Posterior vena cava (tissue), 2 donors: ENCODE measurements at regions of chr13 and their contacts with region 1.

Region 1: GRCh38 chr13:30802953-30803478 is 67.7 kb downstream of the ALOX5AP start:
- DNase-seq: peak; percentile 98

Region 2: DNA sequence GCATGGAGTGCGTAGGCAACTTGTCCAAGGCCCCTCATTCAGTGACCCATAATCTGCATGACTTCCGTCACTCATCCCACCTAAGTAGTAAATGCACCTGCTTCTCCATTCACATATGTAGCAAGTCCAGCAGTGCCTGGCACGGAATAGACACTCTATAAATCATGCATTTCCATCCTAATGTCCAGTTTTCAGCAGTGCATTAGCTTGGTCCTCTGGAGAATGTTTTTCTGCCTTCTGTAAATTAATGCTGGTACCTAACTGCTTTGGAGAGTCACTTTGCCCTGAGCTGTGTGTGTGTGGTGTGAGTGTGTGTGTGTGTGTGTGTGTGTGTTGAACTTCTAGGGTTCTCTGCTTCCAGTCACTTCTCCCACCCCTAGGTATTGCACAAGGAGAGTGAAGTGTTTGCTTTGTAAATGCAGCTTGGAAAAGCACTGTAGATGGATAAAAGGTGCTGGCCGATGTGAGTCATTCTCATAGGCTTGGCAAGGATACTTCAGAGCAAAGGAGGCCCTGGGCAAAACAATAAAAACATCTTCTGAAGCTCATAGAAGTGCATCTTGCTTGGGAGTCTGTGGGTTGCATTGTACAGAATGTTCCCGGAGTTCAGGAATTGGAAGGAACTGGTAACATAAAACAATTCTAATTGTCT is 677.5 kb before region 1 on chr13:
- intact Hi-C with region 1: loop called in 1 of 2 experiments (anchors 10 kb)
- DNase-seq: no peak

Region 3: GRCh38 chr13:30465585-30466357 is 337.2 kb before region 1 on chr13 and contains the start of gene HMGB1:
- intact Hi-C with region 1: loop called in 1 of 2 experiments (anchors 10 kb)
- DNase-seq: peak; percentile 99
- total RNA-seq, gene HMGB1: 241 to 254 TPM

Region 4: GRCh38 chr13:30679483-30680330 is 123.3 kb before region 1 on chr13:
- intact Hi-C with region 1: loop called in 1 of 2 experiments (anchors 5 kb)
- DNase-seq: no peak

Region 5: DNA sequence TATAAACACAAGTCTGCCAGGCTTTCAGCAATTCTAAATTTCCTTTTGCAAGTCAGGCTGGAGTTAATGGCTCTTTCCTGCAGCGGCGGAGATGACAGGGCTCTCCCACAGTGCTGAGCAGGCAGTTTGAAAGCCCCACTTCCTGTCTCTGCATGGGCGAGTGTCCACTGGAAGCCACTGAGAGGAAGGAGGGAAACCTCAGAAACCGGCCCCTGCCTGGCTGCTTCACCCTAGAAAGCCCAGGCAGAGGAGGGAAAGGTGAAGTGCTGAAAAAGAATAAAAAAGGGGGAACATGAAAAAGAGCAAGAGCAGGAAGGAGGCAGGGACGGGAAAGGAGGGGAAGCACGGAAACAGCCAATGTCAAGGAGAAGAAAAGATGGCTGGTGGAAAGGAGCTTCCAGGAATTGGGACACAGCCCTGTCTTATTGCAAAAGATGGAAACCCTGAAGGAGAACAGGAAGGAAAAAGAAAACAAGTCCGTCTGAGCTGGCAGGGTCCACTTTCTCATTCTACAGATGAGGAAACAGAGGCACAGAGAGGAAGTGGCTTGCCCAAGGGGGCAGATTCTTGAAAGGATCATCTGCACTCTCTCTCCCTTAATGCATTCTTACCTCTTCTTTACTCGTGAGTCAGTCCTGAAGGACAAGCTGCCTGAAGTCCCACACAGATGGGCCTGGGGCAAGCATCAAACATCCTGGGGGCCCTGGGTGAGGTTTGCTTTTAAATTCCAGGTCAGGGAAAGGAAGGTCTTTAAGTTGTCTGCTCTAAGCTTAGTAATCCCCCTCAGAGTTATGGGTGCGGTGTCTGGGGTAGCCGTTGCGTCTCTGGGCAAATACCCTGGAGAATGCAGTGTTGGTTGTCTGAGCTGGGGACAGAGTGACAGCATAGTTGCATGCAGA is 106.5 kb before region 1 on chr13:
- intact Hi-C with region 1: no loop called
- DNase-seq: no peak

Region 6: DNA sequence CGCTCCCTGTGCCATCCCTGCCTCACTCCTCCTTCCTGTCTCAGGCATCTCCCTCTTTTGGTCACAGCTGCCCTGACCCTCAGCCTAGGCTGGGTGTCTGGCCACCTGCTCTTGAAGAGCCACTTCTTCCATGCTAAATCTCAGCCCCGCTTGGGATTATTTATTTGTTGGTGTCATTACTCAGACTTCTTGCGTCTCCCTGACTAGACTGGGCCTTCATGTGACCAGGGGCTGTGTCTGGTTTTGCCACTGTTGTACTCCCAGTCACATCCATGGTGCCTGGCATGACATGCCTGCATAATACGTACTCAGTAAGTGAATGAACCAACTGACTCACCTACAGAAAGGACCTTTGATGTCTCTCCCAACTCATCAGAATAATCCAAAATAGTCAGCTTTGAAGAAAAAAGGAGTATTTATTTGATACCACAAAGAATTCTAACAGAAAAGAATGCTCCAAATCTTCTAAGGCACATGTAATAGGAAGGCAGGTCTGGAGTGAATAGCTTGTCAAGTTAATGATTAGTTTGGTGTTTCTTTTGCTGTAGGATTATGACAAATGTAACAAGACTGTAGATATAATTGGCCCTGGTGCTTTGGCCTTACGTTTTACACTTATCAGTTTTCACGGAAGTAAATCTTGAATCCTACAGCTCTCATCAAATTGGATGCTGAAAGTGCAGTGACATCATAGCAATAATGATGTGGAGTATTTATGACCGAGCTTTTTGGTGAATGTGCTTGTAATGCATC is 16.3 kb after region 1 on chr13:
- intact Hi-C with region 1: no loop called
- DNase-seq: no peak

Region 7: GRCh38 chr13:31044377-31045285 is 241.6 kb after region 1 on chr13:
- intact Hi-C with region 1: loop called in 1 of 2 experiments (anchors 10 kb)
- DNase-seq: peak; percentile 94